SK-N-SH (cell line): ENCODE measurements at regions of chr15 and their contacts with region 1.

Region 1: DNA sequence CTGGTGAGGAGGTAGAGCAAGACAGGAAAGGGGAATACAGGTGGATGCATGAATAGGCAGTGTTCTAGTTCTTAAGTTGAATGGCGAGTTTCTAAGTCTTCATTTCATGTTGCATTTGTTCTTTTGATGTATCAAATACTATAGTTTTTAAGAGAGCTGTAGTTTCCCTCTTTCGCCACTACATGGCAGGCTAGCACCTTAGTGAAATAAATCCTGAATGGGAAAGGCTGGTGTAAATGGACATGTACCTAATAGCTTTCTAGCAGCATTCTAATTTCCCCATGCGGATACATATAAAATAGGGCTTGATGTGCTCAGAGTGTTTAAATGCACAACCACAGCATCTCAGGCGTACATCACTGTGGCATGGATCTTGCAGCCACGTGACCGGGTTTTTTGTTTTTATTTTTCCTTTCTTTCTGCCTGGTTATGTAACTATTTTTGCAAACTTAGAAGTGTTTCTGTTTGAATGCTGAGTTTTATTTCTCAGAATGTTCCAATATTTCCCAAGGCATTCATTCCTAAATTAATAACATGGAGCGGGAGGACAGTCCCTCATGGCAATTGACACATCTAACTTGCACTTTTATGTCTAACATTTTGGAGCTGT is 23.5 kb upstream of the CLN6 start:
- DNase-seq: peak; percentile 75
- H3K4me3 ChIP-seq: no peak overlapping the region; a peak in 1 of 4 replicates
- H3K27ac ChIP-seq: no peak overlapping the region
- H3K4me1 ChIP-seq: no peaks in the 10 kb centered on the region
- H3K27me3 ChIP-seq: no peaks in the 10 kb centered on the region
- CTCF ChIP-seq: peak; percentile 94
- EP300 ChIP-seq: no peak
- RAD21 ChIP-seq: peak; percentile 93

Region 2: DNA sequence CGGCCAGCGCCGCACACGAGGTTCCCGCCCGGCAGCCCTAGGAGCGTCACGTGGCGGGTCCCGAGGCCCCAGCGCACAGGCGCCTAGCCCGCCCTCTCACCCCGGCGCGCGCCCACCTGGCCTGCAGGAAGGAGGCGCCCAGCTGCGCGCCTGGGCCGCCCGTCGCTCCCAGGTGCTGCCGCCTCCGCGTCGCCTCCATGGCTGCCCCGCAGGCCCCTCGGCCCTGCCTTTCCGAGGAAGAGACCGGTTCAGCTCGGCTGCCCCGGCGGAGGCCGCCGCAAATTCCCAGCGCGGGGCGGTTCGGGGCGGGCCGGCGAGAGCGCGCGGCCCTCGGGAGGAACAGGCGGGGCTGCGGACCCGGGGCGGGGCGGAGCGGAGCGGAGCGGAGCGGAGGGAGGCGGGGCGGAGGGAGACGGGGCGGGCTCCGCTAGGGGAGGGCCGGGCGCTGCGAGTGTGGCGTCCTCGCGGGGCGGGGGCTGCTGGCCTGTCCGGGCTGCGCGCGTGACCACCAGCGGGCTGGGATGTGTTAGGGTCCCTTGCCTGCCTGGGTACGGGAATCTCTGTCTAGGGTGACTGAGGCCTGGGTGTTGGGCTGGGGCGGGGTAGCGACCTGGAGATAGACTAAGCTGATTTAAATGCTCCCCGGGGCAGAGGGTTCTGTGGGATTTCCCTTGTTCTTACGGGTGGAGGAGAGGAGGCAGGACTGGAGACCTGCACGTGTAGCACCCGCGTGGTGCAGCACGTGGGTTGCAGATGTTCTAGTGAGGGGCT is 23.5 kb before region 1 on chr15 and contains the start of gene CLN6:
- CTCF ChIA-PET with region 1: interaction called, 13 read pairs
- POLR2A ChIA-PET with region 1: interaction called, 3 read pairs
- DNase-seq: peak; percentile 97
- H3K4me3 ChIP-seq: peak within 1 kb of the TSS; percentile 74 to 96
- H3K27ac ChIP-seq: peak within 1 kb of the TSS; percentile 52 to 85
- H3K4me1 ChIP-seq: peaks cover 10 to 41% of the 10 kb centered on the region in 2 experiments; a peak in 2 of 4 replicates
- H3K27me3 ChIP-seq: no peaks in the 10 kb centered on the region
- CTCF ChIP-seq: no peak
- EP300 ChIP-seq: no peak
- RAD21 ChIP-seq: no peak
- polyA plus RNA-seq, gene CLN6: 27.5 and 32.2 TPM in 2 replicates

Region 3: DNA sequence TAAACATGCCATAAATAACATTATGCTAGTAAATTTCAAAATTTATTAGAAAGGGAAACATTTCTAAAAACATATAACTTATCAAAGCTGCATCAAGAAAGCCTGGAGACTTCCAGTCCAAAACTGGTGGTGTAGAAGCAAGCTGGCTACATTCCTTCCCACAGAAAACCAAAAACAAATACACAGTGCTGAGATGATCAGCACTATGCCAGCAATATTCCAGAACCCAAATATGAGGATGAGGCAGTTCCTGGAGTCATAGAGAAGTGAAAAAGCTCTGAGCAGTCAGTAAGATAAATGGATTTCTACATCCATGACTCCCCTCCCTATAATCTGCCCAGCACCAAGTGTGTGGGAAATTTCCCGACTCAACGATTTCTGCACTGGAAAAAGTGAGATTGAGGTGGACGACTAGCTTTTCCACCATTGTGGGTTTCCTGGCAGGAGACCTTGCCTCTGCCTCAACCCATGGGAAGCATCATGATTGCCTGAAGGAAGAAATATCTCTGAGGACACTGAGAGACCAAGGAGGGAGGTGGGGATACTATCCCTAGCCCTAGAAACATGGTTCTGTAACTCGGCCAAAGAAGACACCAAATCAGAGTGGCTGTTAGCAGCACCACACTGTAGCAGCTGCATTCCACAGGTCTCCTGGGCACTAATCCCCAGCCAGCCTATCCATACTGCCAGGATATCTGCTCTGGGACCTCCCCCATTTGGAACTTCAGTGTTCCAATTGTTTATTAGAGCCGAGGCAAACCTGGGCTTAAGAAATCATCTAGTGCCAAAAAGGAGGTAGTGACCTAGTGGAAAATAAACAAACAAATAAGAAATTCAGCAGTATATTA is 11.7 kb before region 1 on chr15:
- CTCF ChIA-PET with region 1: interaction called, 17 read pairs
- POLR2A ChIA-PET with region 1: no interaction called
- DNase-seq: no peak
- H3K4me3 ChIP-seq: no peak overlapping the region
- H3K27ac ChIP-seq: no peak overlapping the region
- H3K4me1 ChIP-seq: no peaks in the 10 kb centered on the region
- H3K27me3 ChIP-seq: no peaks in the 10 kb centered on the region
- CTCF ChIP-seq: no peak
- EP300 ChIP-seq: no peak
- RAD21 ChIP-seq: no peak

Region 4: DNA sequence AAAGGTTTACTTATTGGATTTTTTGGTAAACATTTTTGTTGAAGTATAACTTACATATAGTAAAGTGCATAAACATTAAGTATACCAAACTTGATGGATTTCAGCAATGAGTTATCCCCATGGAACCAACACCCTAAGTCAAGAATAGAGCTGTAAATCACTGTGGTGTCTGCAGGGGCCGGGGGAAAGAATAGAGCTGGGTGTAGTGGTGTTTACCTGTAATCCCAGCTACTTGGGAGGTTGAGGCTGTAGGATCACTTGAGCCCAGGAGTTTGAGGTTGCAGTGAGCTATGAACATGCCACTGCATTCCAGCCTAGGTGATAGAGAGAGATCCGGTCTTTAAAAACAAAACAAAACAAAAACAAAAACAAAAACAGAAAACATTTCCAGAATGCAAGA is 11.3 kb after region 1 on chr15:
- CTCF ChIA-PET with region 1: interaction called, 10 read pairs
- POLR2A ChIA-PET with region 1: no interaction called
- DNase-seq: no peak
- H3K4me3 ChIP-seq: no peak overlapping the region
- H3K27ac ChIP-seq: no peak overlapping the region
- H3K4me1 ChIP-seq: no peaks in the 10 kb centered on the region
- H3K27me3 ChIP-seq: no peaks in the 10 kb centered on the region
- CTCF ChIP-seq: no peak
- EP300 ChIP-seq: no peak
- RAD21 ChIP-seq: no peak

Region 5: GRCh38 chr15:68271854-68272471 is 18.9 kb after region 1 on chr15:
- CTCF ChIA-PET with region 1: interaction called, 12 read pairs
- POLR2A ChIA-PET with region 1: no interaction called
- DNase-seq: peak; percentile 51
- H3K4me3 ChIP-seq: no peak overlapping the region; a peak in 2 of 4 replicates
- H3K27ac ChIP-seq: peak overlapping the region; percentile 77 to 90
- H3K4me1 ChIP-seq: peaks cover 17 to 18% of the 10 kb centered on the region in 2 experiments
- H3K27me3 ChIP-seq: no peaks in the 10 kb centered on the region
- CTCF ChIP-seq: no peak
- EP300 ChIP-seq: no peak
- RAD21 ChIP-seq: no peak

Region 6: GRCh38 chr15:68298882-68299381 is 45.9 kb after region 1 on chr15:
- CTCF ChIA-PET with region 1: interaction called, 14 read pairs
- POLR2A ChIA-PET with region 1: no interaction called
- DNase-seq: no peak
- H3K4me3 ChIP-seq: no peak overlapping the region
- H3K27ac ChIP-seq: 0 out of 4 replicates have a peak overlapping the region, but pooled peaks of 1 of the 2 experiments have one; percentile 10
- H3K4me1 ChIP-seq: peaks cover 0 to 4% of the 10 kb centered on the region in 2 experiments; a peak in 2 of 4 replicates
- H3K27me3 ChIP-seq: no peaks in the 10 kb centered on the region
- CTCF ChIP-seq: no peak
- EP300 ChIP-seq: no peak
- RAD21 ChIP-seq: no peak

Region 7: DNA sequence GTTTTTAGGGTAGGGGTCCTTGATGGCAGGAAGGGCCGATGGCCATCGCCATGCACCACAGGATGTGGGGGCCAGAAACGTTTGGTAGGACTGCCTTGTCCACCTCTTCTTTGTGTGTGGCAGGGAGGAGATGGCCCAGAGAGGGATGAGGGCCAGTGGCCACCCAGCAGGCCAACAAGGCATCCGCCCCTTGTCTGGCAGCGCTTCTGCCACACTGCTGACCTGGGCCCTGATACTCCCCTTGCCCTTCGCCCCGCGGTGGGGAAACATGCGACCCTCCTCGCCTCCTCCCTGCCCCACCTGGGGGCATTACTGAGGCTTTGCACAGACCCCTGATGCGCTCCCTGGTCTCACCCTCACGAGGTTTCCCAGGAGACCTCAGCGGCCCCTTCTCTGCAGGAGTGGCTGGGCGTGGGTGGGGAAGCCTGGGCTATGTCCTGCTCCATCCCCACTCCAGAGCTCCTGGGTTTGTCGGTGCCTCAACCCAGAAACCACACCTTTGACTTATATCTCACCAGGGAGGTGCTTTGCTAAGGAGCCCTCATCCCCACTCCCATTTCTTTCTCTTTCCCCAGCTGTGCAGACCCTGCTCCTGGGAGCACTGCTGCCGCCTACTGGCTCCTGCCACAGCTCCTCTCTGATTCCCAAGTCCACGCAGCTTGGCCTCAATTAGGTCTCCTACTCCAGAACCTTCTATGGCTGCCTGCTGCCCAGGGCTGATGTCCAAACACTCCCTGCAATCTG is 63.2 kb after region 1 on chr15:
- CTCF ChIA-PET with region 1: interaction called, 15 read pairs
- POLR2A ChIA-PET with region 1: no interaction called
- DNase-seq: no peak
- H3K4me3 ChIP-seq: no peak overlapping the region
- H3K27ac ChIP-seq: no peak overlapping the region
- H3K4me1 ChIP-seq: no peaks in the 10 kb centered on the region
- H3K27me3 ChIP-seq: no peaks in the 10 kb centered on the region
- CTCF ChIP-seq: peak; percentile 37; the same call in 1 of the 2 replicates
- EP300 ChIP-seq: no peak
- RAD21 ChIP-seq: no peak